ENCODE measurements at regions of chr22 and their contacts with region 1.

Region 1: DNA sequence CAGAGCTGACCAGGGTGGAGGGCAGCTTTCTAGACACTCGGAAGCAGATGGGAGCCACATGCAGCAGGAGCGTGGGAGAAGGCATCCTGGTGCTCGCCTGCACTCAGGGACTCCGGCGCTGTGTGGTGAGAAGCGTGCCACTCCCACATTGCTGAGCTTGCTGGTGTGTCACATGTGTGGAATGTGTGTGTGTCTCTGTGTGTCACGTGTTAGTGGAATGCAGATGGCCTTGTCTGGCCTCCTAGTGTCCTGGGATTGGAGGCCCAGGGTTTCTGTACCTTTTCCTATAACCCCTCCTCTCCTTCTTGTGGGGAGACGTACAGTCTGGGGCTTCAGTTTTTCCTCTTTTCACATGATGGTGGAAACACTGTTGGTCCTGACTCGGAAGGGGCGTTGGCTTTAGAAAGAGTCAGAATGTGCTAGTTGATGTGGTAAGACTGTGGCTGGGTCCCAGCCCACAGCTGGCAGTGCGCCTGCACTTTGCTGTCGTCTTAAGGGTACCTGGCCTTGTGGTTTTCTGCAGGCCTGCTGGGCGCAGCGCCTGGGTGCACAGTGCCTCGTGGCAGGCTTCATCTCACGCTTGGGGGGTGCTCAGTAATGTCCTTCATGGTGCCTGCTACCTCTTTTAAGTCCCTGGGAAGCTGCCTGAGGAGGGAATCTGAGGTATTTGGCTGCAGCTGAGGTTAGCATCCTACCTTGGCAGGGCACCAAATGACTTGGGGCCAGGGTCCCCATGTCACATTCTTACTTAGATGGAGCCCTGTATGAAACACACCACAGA is 61.8 kb downstream of the MED15 start:
- DNase-seq: peak; percentile 97
- H3K4me3 ChIP-seq: no peak overlapping the region
- CTCF ChIP-seq: no peak

Region 2: DNA sequence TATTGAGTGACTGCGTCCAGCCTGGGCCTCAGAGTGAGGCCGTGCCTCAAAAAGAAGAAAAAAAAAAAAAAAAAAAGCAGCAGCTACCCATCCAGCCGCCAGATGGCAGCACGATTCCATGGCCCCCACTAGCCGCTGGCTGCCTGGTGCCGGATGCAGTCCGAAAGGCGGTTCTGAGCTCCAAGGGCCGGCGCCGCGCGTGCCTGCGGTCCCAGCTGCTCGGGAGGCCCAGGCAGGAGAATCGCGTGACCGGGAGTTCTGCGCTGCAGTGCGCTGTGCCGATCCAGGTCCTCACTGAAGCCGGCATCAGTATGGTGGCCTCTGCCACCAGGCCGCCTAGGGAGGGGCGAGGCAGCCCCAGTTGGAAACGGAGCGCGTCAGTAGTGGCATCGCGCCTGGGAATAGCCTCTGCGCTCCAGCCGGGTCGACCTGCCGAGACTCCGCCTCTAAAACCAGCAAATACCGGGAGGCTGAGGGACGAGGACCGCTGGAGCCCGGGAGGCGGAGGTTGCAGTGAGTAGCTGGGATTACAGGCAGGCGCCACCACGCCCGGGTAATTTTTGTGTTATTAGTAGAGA is 150.9 kb before region 1 on chr22:
- CTCF ChIA-PET with region 1: interaction called, 15 read pairs
- POLR2A ChIA-PET with region 1: no interaction called
- DNase-seq: no peak
- H3K4me3 ChIP-seq: peak overlapping the region; percentile 56
- CTCF ChIP-seq: peak; percentile 74

Region 3: GRCh38 chr22:20514658-20515406 is 54.3 kb before region 1 on chr22:
- CTCF ChIA-PET with region 1: interaction called, 39 read pairs
- POLR2A ChIA-PET with region 1: interaction called, 5 read pairs
- DNase-seq: peak; percentile 77
- H3K4me3 ChIP-seq: no peak overlapping the region
- CTCF ChIP-seq: no peak

Region 4: GRCh38 chr22:20531315-20532201 is 37.6 kb before region 1 on chr22:
- CTCF ChIA-PET with region 1: interaction called, 31 read pairs
- POLR2A ChIA-PET with region 1: interaction called, 16 read pairs
- DNase-seq: no peak
- H3K4me3 ChIP-seq: no peak overlapping the region
- CTCF ChIP-seq: no peak

Region 5: DNA sequence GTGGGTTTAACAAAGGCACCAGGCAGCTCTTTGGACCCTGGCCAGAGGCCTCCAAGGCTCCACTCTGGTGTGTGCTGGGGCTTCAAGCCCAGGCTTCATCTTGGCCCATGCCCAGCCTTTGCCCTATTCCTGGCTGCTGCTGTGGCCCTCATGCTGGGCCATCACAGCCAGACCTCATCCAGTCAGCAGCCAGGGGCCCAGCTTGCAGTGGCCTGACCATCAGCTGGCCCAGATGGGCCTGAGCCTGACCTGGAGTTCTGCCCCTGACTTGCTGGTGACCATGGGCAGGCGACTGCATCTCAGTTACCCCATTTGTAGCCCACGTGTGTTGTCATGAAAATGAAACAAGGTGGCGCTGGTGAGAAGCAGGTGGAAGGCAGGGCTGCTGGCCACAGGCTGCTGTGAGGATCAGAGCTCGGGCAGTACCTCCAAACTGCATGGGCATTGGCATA is 14.3 kb after region 1 on chr22:
- CTCF ChIA-PET with region 1: interaction called, 505 read pairs
- POLR2A ChIA-PET with region 1: interaction called, 3 read pairs
- DNase-seq: no peak
- H3K4me3 ChIP-seq: no peak overlapping the region
- CTCF ChIP-seq: no peak

Region 6: GRCh38 chr22:20725987-20726558 is 156.9 kb after region 1 on chr22:
- CTCF ChIA-PET with region 1: no interaction called
- POLR2A ChIA-PET with region 1: no interaction called
- DNase-seq: no peak
- H3K4me3 ChIP-seq: no peak overlapping the region
- CTCF ChIP-seq: no peak

Region 7: DNA sequence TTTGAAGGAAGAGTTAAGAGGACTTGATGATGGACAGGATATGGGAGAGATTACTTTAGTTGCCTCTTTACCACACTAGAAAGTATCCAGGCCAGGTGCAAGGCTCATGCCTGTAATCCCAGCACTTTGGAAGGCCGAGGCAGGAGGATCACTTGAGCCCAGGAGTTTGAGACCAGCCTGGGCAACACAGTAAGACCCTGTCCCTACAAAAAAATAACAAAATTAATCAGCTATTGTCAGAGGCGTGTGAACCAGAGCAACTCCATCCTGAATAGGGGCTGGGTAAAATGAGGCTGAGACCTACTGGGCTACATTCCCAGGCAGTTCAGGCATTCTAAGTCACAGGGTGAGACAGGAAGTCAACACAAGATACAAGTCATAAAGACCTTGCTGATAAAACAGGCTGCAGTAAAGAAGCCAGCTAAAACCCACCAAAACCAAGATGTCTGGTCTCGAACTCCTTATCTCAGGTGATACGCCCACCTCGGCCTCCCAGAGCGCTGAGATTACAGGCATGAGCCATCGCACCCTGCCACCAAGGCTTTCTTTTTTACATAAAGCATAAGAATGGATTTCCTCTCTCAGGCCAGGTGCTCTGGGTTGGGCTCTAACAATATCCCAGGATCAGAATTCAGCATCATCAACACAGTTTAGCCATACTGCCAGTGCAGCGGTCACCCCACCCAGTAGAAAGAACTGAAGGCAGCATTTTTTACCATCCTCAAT is 271.6 kb after region 1 on chr22:
- CTCF ChIA-PET with region 1: no interaction called
- POLR2A ChIA-PET with region 1: no interaction called
- DNase-seq: no peak
- H3K4me3 ChIP-seq: no peak overlapping the region
- CTCF ChIP-seq: no peak

Measured in AG04449 (cell line).